Activated naive CD4-positive, alpha-beta T cell treated with anti-CD3 and anti-CD28 coated beads for 36 hours (primary cell): ENCODE measurements at regions of chr7 and their contacts with region 1.

Region 1: DNA sequence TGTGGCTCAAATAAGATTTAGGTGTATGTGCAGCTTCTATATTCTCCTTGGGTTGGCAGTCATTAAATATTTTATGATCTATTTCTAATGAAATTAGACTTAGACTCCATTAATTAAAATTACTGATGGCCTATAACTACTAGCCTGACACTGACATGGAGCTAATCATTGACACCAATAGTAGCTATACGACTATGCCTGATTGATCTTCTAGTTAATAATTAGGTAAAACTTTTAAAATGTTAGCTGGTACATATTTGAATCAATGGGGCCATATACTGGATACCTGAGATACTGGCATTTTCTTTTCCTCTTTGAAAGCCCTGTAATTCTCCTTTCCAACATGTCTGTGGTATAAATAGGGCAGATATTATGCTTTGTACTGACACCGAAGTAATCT is 14.4 kb downstream of the WEE2 start:
- DNase-seq: no peak
- H3K4me3 Mint-ChIP-seq: no peak overlapping the region
- H3K27ac Mint-ChIP-seq: no peak overlapping the region
- H3K4me1 Mint-ChIP-seq: no peaks in the 10 kb centered on the region
- H3K27me3 Mint-ChIP-seq: no peaks in the 10 kb centered on the region

Region 2: DNA sequence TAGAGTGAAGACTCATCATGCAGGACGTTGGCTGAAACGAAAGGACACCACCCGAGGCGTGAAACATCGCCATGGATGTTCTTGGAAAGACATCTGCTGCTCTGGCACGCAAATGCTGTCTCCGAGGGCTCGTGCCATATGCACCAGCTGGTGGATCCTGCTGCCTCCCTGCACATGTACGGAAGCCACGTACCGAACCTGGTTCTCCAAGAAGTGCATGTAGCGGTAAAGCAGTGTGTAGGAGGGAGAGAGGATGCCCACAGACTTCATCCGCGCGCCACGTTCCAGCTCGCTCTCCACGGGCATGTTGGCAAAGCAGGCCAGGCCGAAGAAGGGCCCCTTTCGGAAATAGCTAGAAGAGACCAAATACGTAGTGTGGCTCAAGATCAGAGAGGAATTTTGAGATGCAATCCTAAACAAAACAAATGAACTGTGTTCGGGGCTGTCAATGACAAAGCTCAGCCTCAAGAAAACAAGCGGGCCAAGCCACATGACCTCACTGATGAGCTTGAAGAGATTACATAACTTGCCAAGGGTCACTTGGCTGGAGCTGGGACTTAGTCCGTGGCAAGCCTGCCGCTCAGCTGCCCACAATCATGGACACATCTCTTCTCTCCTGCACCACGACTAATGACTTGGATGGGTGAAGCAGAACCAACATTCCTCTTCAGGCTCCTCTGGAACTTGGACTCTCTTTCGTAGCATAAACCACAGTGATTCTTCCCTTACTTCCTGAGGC is 37.1 kb before region 1 on chr7:
- CTCF ChIA-PET with region 1: no interaction called
- intact Hi-C with region 1: no loop called
- DNase-seq: no peak
- H3K4me3 Mint-ChIP-seq: no peak overlapping the region
- H3K27ac Mint-ChIP-seq: no peak overlapping the region
- H3K4me1 Mint-ChIP-seq: peaks cover 4% of the 10 kb centered on the region
- H3K27me3 Mint-ChIP-seq: no peaks in the 10 kb centered on the region

Region 3: GRCh38 chr7:142992464-142992863 is 1269.9 kb after region 1 on chr7:
- CTCF ChIA-PET with region 1: no interaction called
- intact Hi-C with region 1: loop called (anchors 10 kb)
- DNase-seq: no peak
- H3K4me3 Mint-ChIP-seq: no peak overlapping the region
- H3K27ac Mint-ChIP-seq: no peak overlapping the region
- H3K4me1 Mint-ChIP-seq: no peaks in the 10 kb centered on the region
- H3K27me3 Mint-ChIP-seq: no peaks in the 10 kb centered on the region